ENCODE measurements at regions of chr12 and their contacts with region 1.

Region 1: DNA sequence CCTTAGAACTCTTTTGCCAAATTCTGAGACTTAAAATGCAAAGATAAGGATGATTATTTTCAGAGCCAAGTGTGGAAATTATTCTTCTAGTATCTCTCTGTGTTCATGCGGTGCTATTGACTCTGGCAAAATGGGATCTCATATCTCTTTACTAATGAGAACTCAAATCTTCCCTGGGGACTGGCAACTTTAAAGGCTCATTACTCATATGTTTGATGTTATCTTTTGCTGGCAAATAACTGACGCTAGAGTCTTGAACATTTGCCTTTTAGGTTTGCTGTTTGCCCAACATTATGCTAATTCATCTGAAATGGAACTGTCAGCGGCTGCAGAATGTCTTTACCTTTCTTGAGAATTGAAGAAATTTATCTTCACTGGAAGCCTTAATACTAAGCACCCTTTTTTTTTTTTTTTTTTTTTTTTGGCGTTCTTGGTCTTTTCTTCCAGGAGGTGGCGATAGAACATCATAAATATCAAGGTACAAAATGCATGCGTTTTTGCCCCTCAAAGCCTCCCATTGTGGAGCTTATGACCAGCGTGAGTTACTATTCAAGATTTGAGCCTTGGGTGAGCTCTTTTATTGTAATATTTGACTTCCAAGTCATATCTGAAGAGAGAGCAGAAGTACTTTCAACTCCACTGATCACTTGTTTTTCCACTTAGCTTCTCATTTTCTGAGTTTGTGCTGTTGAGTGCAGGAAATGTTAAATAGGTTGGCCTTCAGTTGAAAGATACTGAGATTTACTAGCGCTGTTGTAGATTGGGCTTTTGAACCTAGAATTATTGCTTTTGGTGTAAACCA is 86.6 kb downstream of the CAND1 start:
- DNase-seq: peak; percentile 37
- ATAC-seq: peak; percentile 58
- H3K4me3 Mint-ChIP-seq: no peak overlapping the region
- H3K27ac Mint-ChIP-seq: no peak overlapping the region
- H3K4me1 Mint-ChIP-seq: peaks cover 18% of the 10 kb centered on the region
- H3K27me3 Mint-ChIP-seq: no peaks in the 10 kb centered on the region

Region 2: GRCh38 chr12:67943226-67943892 is 587.6 kb after region 1 on chr12:
- CTCF ChIA-PET with region 1: interaction called, 110 read pairs
- POLR2A ChIA-PET with region 1: no interaction called
- DNase-seq: peak; percentile 80
- ATAC-seq: peak; percentile 82
- H3K4me3 Mint-ChIP-seq: no peak overlapping the region
- H3K27ac Mint-ChIP-seq: no peak overlapping the region
- H3K4me1 Mint-ChIP-seq: no peaks in the 10 kb centered on the region
- H3K27me3 Mint-ChIP-seq: peaks cover 9% of the 10 kb centered on the region

Measured in activated CD8-positive, alpha-beta T cell treated with anti-CD3 and anti-CD28 coated beads, Interleukin-2, amount 10 ng/mL, durations not matched to agents 7 days and 5 days (primary cell).